Activated CD4-positive, alpha-beta memory T cell treated with anti-CD3 and anti-CD28 coated beads for 36 hours (primary cell): ENCODE measurements at regions of chr11 and their contacts with region 1.

Region 1: DNA sequence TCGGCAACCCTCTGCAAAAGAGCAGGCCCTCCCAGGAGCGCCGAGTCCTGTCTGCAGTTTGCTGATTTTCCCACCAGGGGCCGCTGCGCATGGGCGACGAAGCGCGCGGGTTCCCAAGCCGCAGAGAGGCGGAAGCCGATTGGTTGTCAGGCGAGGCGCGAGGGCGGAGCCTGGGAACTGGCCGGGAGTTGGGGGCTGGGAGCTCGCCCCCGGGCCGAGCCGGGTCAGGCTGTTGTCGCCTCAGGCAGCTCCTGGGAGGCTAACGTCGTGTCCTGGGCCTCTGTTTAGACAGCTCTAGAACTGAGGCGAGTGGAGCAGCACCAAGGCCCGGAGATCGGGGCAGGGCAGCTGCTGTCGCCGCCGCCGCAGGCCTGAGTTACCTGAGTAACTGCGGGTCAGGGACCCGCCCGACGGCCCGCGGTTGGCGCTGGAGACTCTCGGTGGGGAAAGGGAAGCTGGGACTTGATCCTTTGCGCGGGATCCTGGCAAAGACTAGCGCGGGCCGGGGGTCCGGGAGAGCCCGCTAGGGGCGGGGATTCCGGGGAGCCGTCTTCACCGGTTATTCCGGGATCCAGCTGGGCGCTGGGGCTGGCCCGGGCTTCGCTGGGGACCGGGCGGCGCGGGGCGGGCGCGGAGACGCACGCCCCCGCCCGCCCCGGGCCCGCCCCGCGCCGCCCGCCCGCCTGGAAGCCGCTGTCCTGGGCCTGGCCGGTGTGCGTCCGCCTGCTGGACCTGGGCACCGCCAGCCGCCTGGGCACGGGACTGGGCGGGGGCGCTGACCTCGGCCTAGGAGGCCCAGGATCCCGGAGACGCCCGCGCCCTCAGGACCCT is at the start of gene STIM1:
- DNase-seq: peak; percentile 99
- H3K4me3 Mint-ChIP-seq: peak within 1 kb of the TSS; percentile 85
- H3K27ac Mint-ChIP-seq: peak within 1 kb of the TSS; percentile 99
- H3K4me1 Mint-ChIP-seq: peaks cover 53% of the 10 kb centered on the region
- H3K27me3 Mint-ChIP-seq: no peaks in the 10 kb centered on the region
- total RNA-seq, gene STIM1: 55.9 to 61.1 TPM

Region 2: DNA sequence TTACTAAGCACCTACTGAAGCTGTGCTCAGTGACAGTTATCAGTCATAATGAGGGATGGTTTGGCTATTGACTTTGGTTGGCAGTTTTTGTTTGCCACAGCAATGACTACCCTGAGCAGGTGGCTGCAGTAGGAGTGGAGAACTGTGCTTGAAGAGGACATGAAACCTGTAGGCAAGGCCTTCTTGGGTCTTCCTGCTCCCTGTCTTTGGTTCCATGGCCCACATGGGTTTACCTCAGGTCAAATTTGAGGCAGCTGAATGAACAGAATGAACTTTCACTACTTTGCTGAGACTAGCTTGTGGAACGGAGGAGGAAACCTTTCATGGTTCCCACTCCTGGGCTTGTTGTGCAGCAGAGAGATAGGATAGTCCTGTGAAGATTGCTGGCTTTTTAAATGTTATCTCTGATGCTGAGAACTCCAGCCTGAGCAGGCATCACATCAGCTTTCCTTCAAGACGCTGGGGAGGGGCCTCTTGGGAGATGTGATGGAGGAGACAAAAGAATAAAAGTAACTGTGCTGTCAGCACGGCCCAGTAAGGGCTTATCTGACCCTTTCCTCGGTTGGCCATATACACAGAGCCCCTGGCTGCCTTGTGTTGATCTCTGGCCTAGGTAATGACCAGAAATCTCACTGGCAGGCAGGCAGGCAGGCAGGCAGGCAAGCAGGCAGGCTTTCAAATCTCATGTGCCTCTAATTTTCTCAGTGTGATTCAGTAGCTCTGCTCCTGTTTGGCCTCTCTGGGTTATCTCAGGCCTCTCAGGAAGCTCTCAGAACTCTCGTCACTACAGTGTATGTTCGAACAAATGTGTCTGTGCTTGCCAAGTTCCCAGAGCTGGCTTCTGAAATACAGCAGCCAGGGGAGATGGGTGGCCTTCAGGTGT is 12.3 kb after region 1 on chr11:
- CTCF ChIA-PET with region 1: interaction called, 58 read pairs
- POLR2A ChIA-PET with region 1: interaction called, 15 read pairs
- intact Hi-C with region 1: loop called (anchors 1 kb)
- DNase-seq: peak; percentile 68
- H3K4me3 Mint-ChIP-seq: no peak overlapping the region
- H3K27ac Mint-ChIP-seq: peak overlapping the region; percentile 87
- H3K4me1 Mint-ChIP-seq: peaks cover 71% of the 10 kb centered on the region
- H3K27me3 Mint-ChIP-seq: no peaks in the 10 kb centered on the region

Region 3: DNA sequence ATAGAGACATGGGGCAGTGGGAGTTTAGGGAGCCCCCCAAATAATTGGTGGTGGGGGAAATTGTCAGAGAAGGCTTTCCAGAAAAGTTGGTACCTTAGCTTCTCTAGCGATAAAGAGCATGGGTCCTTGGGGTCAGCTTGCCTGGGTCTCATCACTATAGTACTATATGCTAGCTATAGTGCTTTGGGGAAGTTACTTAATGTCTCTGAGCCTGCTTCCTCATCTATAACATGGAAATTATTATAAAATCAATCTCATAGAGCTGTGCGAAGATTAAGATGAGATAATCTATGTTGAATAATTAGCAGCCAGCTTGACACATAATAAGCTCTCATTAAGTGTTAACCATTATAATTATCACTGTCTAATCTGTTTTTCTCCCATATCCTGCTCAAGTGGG is 41.5 kb after region 1 on chr11:
- CTCF ChIA-PET with region 1: interaction called, 15 read pairs
- POLR2A ChIA-PET with region 1: no interaction called
- intact Hi-C with region 1: no loop called
- DNase-seq: no peak
- H3K4me3 Mint-ChIP-seq: no peak overlapping the region
- H3K27ac Mint-ChIP-seq: no peak overlapping the region
- H3K4me1 Mint-ChIP-seq: peaks cover 40% of the 10 kb centered on the region
- H3K27me3 Mint-ChIP-seq: no peaks in the 10 kb centered on the region

Region 4: DNA sequence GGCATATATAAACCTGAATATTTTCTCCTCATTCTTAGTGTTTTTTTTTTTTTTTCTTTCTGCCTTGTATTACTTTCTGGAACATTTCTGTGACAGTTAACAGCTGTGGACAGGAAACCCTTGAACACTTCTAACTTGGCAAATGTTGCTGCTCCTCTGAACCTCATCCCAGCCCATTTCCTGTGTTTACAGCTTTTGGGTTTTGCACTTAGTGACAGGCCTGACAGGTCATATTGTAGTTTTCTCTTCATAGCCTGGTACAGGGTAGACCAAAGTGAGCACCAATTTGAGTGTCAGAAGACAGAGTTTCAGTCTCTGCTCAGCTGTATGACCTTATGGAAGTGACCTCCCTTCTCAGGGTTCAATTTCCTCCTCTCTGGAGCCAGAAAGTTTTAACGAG is 91.9 kb after region 1 on chr11:
- CTCF ChIA-PET with region 1: interaction called, 30 read pairs
- POLR2A ChIA-PET with region 1: interaction called, 8 read pairs
- intact Hi-C with region 1: loop called (anchors 1 kb)
- DNase-seq: peak; percentile 69
- H3K4me3 Mint-ChIP-seq: peak overlapping the region; percentile 40
- H3K27ac Mint-ChIP-seq: peak overlapping the region; percentile 93
- H3K4me1 Mint-ChIP-seq: peaks cover 94% of the 10 kb centered on the region
- H3K27me3 Mint-ChIP-seq: no peaks in the 10 kb centered on the region

Region 5: GRCh38 chr11:3977078-3977477 is 121.9 kb after region 1 on chr11:
- CTCF ChIA-PET with region 1: interaction called, 17 read pairs
- POLR2A ChIA-PET with region 1: no interaction called
- intact Hi-C with region 1: no loop called
- DNase-seq: no peak
- H3K4me3 Mint-ChIP-seq: no peak overlapping the region
- H3K27ac Mint-ChIP-seq: no peak overlapping the region
- H3K4me1 Mint-ChIP-seq: peaks cover 48% of the 10 kb centered on the region
- H3K27me3 Mint-ChIP-seq: no peaks in the 10 kb centered on the region

Region 6: GRCh38 chr11:4086575-4087353 is 231.6 kb after region 1 on chr11:
- CTCF ChIA-PET with region 1: interaction called, 16 read pairs
- POLR2A ChIA-PET with region 1: no interaction called
- intact Hi-C with region 1: no loop called
- DNase-seq: no peak
- H3K4me3 Mint-ChIP-seq: no peak overlapping the region
- H3K27ac Mint-ChIP-seq: peak overlapping the region; percentile 59
- H3K4me1 Mint-ChIP-seq: peaks cover 51% of the 10 kb centered on the region
- H3K27me3 Mint-ChIP-seq: no peaks in the 10 kb centered on the region